Heart left ventricle (tissue), 16 donors: ENCODE measurements at regions of chr11 and their contacts with region 1.

Region 1: GRCh38 chr11:61967116-61967923 is at the start of gene FTH1:
- DNase-seq: peak; percentile 94 to 97 (median 94)
- ATAC-seq: peak; percentile 33 to 86 (median 76)
- H3K4me3 ChIP-seq: peak within 1 kb of the TSS; percentile 66 to 98 (median 92)
- H3K27ac ChIP-seq: peak within 1 kb of the TSS; percentile 94 to 100 (median 99)
- H3K4me1 ChIP-seq: peaks cover 21 to 82% (median 60%) of the 10 kb centered on the region in 12 donors
- H3K27me3 ChIP-seq: no peaks in the 10 kb centered on the region
- CTCF ChIP-seq: no peak
- POLR2A ChIP-seq: peak; percentile 77 to 100
- total RNA-seq, gene FTH1: 1,764 to 5,397 (median 2,454) TPM

Region 2: DNA sequence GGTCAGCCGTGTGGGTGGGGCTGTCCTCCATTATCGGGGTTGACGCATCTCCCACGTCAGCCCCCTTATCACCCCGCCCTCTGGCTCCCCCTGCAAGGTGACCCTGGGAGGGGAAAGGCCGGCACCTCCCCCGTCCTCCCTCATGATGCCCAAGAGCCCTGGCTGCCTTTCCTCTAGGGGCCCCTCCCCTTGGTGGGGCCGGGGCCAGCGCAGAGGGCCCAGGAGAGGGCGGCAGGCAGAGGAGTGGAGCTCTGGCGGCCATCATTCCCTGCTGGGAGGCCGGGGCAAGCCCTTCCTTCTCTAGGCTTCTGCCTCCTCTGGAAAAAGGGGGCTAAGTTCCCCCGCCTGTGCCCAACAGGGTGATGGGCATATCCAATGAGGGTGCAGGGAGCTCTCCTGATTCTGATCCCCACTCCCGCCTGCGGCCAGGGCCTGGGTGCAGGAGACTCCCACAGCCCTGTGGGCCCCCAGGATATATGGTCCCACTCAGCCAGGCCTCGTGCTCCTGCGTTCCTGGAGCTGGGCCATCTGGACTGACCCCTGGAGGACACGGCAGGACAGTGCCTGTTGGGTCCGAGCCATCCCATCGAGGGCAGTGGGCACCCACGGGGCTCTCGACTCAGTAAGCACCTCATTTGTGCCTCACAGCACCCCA is 202.6 kb before region 1 on chr11:
- intact Hi-C with region 1: no loop called
- DNase-seq: peak in 1 of 5 donors; percentile 78
- ATAC-seq: peak in 3 of 4 donors; percentile 53 to 81 (median 55)
- H3K4me3 ChIP-seq: no peak overlapping the region
- H3K27ac ChIP-seq: no peak overlapping the region
- H3K4me1 ChIP-seq: peaks cover 0 to 5% (median 0%) of the 10 kb centered on the region in 12 donors
- H3K27me3 ChIP-seq: peaks cover 0 to 7% (median 0%) of the 10 kb centered on the region in 9 donors
- CTCF ChIP-seq: no peak
- POLR2A ChIP-seq: no peak

Region 3: GRCh38 chr11:61891331-61892084 is 75.8 kb before region 1 on chr11 and contains the start of gene FADS3:
- intact Hi-C with region 1: loop called in 2 of 10 experiments (anchors 5 kb)
- DNase-seq: peak; percentile 91 to 95 (median 93)
- ATAC-seq: peak; percentile 76 to 91 (median 86)
- H3K4me3 ChIP-seq: peak within 1 kb of the TSS; percentile 67 to 98 (median 94)
- H3K27ac ChIP-seq: peak within 1 kb of the TSS; percentile 68 to 97 (median 93)
- H3K4me1 ChIP-seq: peaks cover 15 to 55% (median 41%) of the 10 kb centered on the region in 12 donors
- H3K27me3 ChIP-seq: no peaks in the 10 kb centered on the region
- CTCF ChIP-seq: peak in 1 of 12 donors; percentile 4
- POLR2A ChIP-seq: peak in 1 of 2 donors; percentile 86
- total RNA-seq, gene FADS3: 53.2 to 147 (median 79.6) TPM

Region 4: DNA sequence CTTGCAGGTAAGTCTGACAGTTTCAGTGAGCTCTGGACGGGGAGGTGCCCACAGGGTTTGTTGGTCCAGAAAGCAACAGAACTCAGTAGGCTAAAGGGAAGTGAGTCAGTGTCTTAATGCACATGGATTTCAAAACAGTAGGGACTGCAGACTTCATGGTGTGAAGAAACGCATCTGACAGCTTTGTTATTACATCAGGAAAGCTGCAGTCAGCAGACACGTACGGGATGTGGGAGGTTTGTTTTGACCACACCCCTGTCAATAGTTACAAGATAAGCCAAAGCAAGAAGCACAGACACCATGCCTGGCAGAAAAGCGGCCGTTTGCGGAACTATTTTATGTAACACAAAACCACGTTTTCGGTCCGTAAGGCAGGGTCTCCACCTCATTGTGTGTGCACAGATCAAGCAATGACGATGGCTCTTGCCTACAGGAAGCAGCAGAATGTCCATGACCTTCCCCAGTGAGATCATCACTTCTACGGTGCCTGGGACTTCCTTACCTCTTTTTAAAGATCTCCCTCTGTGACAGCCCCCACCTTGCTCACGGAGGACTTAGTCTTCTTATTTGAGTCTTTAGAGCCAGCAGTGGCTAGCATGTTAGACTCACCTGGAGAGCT is 58.3 kb after region 1 on chr11:
- intact Hi-C with region 1: loop called in 5 of 10 experiments (anchors 1 to 10 kb)
- DNase-seq: peak; percentile 54 to 77 (median 70)
- ATAC-seq: peak; percentile 92 to 97 (median 96)
- H3K4me3 ChIP-seq: peak overlapping the region in 9 of 12 donors; percentile 1 to 39 (median 16)
- H3K27ac ChIP-seq: peak overlapping the region; percentile 1 to 89 (median 69)
- H3K4me1 ChIP-seq: peaks cover 0 to 25% (median 7%) of the 10 kb centered on the region in 12 donors
- H3K27me3 ChIP-seq: no peaks in the 10 kb centered on the region
- CTCF ChIP-seq: no peak
- POLR2A ChIP-seq: no peak

Region 5: DNA sequence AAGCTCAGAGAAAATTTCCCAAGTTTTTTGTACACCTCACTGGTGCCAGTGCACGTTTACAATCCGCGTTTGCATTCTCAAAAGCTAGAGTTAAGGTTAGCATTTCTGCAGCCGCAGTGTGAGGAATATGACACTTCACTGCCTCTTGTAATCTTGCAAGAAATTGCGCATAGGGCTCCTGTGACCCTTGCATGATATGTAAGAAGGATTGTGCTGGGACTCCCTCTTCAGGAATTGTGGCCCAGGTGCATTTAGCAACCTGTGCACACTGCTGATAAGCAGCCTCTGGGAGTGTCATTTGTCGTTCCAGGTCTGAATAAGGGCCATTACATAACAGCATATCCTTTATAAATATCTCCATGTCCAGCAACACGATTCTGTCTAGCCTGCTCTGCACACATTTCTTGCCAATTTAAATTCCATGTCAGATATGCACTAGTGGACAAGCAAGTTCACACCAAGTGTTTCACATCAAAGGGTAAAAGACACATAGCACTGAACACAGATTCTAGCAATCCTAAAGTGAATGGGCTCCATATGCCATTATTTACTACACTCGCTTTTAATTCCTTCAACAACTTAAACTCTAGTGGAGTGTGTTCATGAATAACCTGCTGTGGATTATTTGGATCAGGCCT is 87.3 kb after region 1 on chr11:
- intact Hi-C with region 1: loop called in 1 of 10 experiments (anchors 10 kb)
- DNase-seq: no peak
- ATAC-seq: no peak
- H3K4me3 ChIP-seq: no peak overlapping the region
- H3K27ac ChIP-seq: no peak overlapping the region
- H3K4me1 ChIP-seq: peaks cover 0 to 10% (median 3%) of the 10 kb centered on the region in 12 donors
- H3K27me3 ChIP-seq: no peaks in the 10 kb centered on the region
- CTCF ChIP-seq: peak; percentile 9 to 38 (median 26)
- POLR2A ChIP-seq: no peak

Region 6: GRCh38 chr11:62081378-62082291 is 114.3 kb after region 1 on chr11:
- intact Hi-C with region 1: loop called in 1 of 10 experiments (anchors 5 kb)
- DNase-seq: peak; percentile 72 to 88 (median 81)
- ATAC-seq: peak; percentile 61 to 89 (median 83)
- H3K4me3 ChIP-seq: peak overlapping the region in 1 of 12 donors; percentile 18
- H3K27ac ChIP-seq: no peak overlapping the region
- H3K4me1 ChIP-seq: peaks cover 0 to 11% (median 0%) of the 10 kb centered on the region in 12 donors
- H3K27me3 ChIP-seq: no peaks in the 10 kb centered on the region
- CTCF ChIP-seq: peak; percentile 82 to 97 (median 93)
- POLR2A ChIP-seq: no peak

Region 7: DNA sequence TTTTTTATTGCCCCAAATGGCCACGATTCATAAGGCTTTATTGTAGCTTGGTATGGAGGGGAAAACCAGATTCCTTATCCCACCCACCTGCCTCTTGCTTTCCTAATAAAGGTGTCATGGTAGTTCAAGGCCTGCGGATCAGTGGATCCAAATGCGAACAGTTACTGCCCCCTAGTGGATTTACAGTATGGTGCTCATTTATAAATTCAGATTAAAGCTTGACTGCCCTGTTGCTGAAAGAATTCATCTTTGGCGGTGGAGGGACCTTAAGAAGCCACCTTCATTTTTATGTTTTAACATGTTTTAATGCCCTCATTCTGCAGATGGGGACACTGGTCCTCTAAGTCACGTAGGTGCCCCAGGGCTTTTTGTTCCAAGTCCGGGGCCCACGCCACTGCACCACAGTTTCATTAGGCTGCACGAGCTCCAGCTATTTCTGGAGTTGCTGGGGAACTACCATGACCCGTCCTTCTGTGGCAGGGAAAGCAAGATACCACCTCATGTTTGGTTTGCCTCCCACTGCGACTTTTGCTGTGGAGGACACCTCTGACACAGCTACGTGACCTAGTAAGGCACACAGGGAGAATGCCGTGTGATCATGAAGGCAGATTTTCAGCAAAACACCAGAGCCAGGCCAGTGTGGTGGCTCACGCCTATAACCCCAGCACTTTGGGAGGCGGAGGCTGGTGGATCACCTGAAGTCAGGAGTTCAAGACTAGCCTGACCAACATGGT is 140.9 kb after region 1 on chr11:
- intact Hi-C with region 1: loop called in 1 of 10 experiments (anchors 5 kb)
- DNase-seq: peak in 2 of 5 donors; percentile 39 to 59
- ATAC-seq: peak in 2 of 4 donors; percentile 50 to 51
- H3K4me3 ChIP-seq: no peak overlapping the region
- H3K27ac ChIP-seq: peak overlapping the region in 5 of 12 donors; percentile 14 to 70 (median 27)
- H3K4me1 ChIP-seq: peaks cover 4 to 51% (median 20%) of the 10 kb centered on the region in 12 donors
- H3K27me3 ChIP-seq: no peaks in the 10 kb centered on the region
- CTCF ChIP-seq: peak; percentile 78 to 91 (median 82)
- POLR2A ChIP-seq: no peak